H1 (cell line): ENCODE measurements at regions of chr17 and their contacts with region 1.

Region 1: GRCh38 chr17:27760069-27760885 is 40.1 kb downstream of the NOS2 start:
- DNase-seq: peak; percentile 34 to 96
- H3K4me3 ChIP-seq: no peak overlapping the region
- H3K27ac ChIP-seq: no peak overlapping the region
- H3K4me1 ChIP-seq: no peaks in the 10 kb centered on the region
- H3K27me3 ChIP-seq: no peaks in the 10 kb centered on the region
- CTCF ChIP-seq: peak; percentile 77 to 80 (median 78)
- EP300 ChIP-seq: no peak
- POLR2A ChIP-seq: no peak
- RAD21 ChIP-seq: peak; percentile 75

Region 2: GRCh38 chr17:27666831-27667560 is 93.3 kb before region 1 on chr17:
- CTCF ChIA-PET with region 1: interaction called, 338 read pairs
- POLR2A ChIA-PET with region 1: no interaction called
- DNase-seq: no peak
- H3K4me3 ChIP-seq: no peak overlapping the region
- H3K27ac ChIP-seq: no peak overlapping the region
- H3K4me1 ChIP-seq: no peaks in the 10 kb centered on the region
- H3K27me3 ChIP-seq: no peaks in the 10 kb centered on the region
- CTCF ChIP-seq: no peak
- EP300 ChIP-seq: no peak
- POLR2A ChIP-seq: no peak
- RAD21 ChIP-seq: no peak

Region 3: GRCh38 chr17:27741361-27741861 is 18.9 kb before region 1 on chr17:
- CTCF ChIA-PET with region 1: interaction called, 66 read pairs
- POLR2A ChIA-PET with region 1: no interaction called
- DNase-seq: peak in 1 of 2 experiments; percentile 26
- H3K4me3 ChIP-seq: no peak overlapping the region
- H3K27ac ChIP-seq: no peak overlapping the region
- H3K4me1 ChIP-seq: no peaks in the 10 kb centered on the region
- H3K27me3 ChIP-seq: no peaks in the 10 kb centered on the region
- CTCF ChIP-seq: no peak
- EP300 ChIP-seq: no peak
- POLR2A ChIP-seq: no peak
- RAD21 ChIP-seq: no peak

Region 4: GRCh38 chr17:27771586-27771985 is 11.3 kb after region 1 on chr17:
- CTCF ChIA-PET with region 1: interaction called, 31 read pairs
- POLR2A ChIA-PET with region 1: no interaction called
- DNase-seq: no peak
- H3K4me3 ChIP-seq: no peak overlapping the region
- H3K27ac ChIP-seq: no peak overlapping the region
- H3K4me1 ChIP-seq: peaks cover 0 to 6% (median 0%) of the 10 kb centered on the region in 4 experiments; a peak in 1 of 7 replicates
- H3K27me3 ChIP-seq: no peaks in the 10 kb centered on the region
- CTCF ChIP-seq: no peak
- EP300 ChIP-seq: no peak
- POLR2A ChIP-seq: no peak
- RAD21 ChIP-seq: no peak

Region 5: DNA sequence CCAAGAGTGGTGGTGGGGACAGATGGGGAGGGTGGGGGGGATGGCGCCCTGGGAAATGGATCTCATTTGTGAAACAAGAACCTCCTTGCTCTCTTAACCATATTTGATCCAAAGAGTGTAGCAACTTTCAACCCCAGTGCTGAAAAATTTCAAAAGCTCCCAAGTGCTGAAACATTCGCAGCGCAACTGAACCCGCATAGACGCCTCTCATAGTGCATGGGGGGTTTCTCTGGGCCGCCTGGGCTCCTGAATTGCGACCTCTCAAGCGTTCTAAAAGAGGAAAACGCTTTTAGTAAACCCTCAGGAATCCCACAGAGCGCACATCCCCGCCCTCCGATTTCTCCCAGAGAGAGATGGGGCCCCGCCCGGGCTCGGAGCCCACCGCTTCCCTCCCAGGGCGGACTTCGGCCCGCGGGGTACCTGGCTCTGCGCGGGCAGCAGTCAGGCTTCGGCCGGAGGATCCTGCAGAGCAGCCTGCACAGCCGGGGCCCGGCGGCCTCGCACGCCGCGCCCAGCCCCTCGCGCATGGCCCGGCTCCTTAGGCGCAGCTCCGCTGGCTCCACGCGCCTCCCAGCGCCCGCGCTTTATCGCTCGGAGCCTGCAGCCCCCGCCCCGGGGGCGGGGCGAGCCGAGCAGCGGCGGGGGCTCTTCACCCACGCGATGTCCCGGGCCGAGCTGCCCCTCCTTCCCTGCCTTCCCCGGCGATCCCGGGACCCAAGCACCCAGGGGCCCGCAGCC is 33.1 kb after region 1 on chr17:
- CTCF ChIA-PET with region 1: interaction called, 15 read pairs
- POLR2A ChIA-PET with region 1: no interaction called
- DNase-seq: peak in 1 of 2 experiments; percentile 67
- H3K4me3 ChIP-seq: peak overlapping the region; percentile 36 to 60 (median 41)
- H3K27ac ChIP-seq: no peak overlapping the region
- H3K4me1 ChIP-seq: peaks cover 0 to 3% (median 1%) of the 10 kb centered on the region in 4 experiments; a peak in 3 of 7 replicates
- H3K27me3 ChIP-seq: peaks cover 0 to 24% (median 19%) of the 10 kb centered on the region in 4 experiments; a peak in 6 of 7 replicates
- CTCF ChIP-seq: no peak
- EP300 ChIP-seq: no peak
- POLR2A ChIP-seq: no peak
- RAD21 ChIP-seq: no peak

Region 6: GRCh38 chr17:27817731-27818130 is 57.5 kb after region 1 on chr17:
- CTCF ChIA-PET with region 1: no interaction called
- POLR2A ChIA-PET with region 1: no interaction called
- DNase-seq: no peak
- H3K4me3 ChIP-seq: no peak overlapping the region
- H3K27ac ChIP-seq: no peak overlapping the region
- H3K4me1 ChIP-seq: no peaks in the 10 kb centered on the region
- H3K27me3 ChIP-seq: no peaks in the 10 kb centered on the region
- CTCF ChIP-seq: no peak
- EP300 ChIP-seq: no peak
- POLR2A ChIP-seq: no peak
- RAD21 ChIP-seq: no peak

Region 7: DNA sequence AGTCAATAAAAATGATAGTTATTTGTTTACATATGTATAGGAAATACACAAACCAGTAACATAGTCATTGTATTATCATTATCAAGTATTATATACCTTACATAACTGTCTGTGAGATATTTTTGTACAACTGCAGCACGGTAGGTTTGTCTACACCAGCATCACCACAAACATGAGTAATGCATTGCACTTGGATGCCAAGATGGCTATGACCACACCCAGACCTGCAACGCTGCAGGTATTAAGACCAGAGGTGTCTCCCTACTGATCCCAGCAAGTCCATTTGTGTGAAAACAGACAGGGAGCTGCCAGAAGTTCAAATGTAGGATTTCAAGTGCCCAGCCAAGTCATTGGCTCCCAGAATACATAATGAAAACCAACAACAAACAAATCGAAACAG is 74.3 kb after region 1 on chr17:
- CTCF ChIA-PET with region 1: no interaction called
- POLR2A ChIA-PET with region 1: no interaction called
- DNase-seq: no peak
- H3K4me3 ChIP-seq: no peak overlapping the region
- H3K27ac ChIP-seq: no peak overlapping the region
- H3K4me1 ChIP-seq: peaks cover 0 to 3% (median 0%) of the 10 kb centered on the region in 4 experiments; a peak in 1 of 7 replicates
- H3K27me3 ChIP-seq: no peaks in the 10 kb centered on the region
- CTCF ChIP-seq: no peak
- EP300 ChIP-seq: no peak
- POLR2A ChIP-seq: no peak
- RAD21 ChIP-seq: no peak

Region 8: DNA sequence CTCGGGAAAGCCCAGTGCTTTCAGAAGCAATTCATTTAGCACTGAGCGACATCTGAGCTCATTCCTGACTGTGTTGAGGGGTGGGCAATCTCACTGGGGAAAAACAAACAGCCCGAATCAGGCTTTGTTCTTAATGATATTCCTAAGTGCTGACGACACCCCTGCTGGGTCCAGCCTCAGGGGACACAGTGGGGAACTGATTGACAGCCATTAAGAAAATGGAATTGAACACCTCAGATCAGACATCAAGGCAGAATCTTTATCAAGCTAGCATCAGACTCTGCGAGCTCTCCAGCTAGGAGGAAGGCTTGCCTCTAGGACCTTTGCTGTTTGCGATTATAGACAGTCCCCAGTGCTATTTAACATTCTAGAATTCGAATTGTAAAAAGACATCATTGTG is 155.4 kb after region 1 on chr17:
- CTCF ChIA-PET with region 1: no interaction called
- POLR2A ChIA-PET with region 1: no interaction called
- DNase-seq: peak; percentile 53 to 60
- H3K4me3 ChIP-seq: no peak overlapping the region
- H3K27ac ChIP-seq: no peak overlapping the region
- H3K4me1 ChIP-seq: peaks cover 1 to 12% (median 8%) of the 10 kb centered on the region in 4 experiments; a peak in 3 of 7 replicates
- H3K27me3 ChIP-seq: peaks cover 34 to 68% (median 61%) of the 10 kb centered on the region in 4 experiments
- CTCF ChIP-seq: no peak
- EP300 ChIP-seq: no peak
- POLR2A ChIP-seq: no peak
- RAD21 ChIP-seq: no peak